ENCODE measurements at regions of chr21 and their contacts with region 1.

Region 1: GRCh38 chr21:20999659-21000058 is 1.4 kb downstream of the NCAM2 start:
- DNase-seq: no peak
- H3K4me3 ChIP-seq: no peak overlapping the region
- H3K27ac ChIP-seq: no peak overlapping the region
- H3K4me1 ChIP-seq: peaks cover 8% of the 10 kb centered on the region in 2 donors
- H3K27me3 ChIP-seq: no peaks in the 10 kb centered on the region
- CTCF ChIP-seq: peak; percentile 37 to 67 (median 53)

Region 2: GRCh38 chr21:21196087-21196486 is 196.4 kb after region 1 on chr21:
- intact Hi-C with region 1: loop called (anchors 5 kb)
- DNase-seq: no peak
- H3K4me3 ChIP-seq: no peak overlapping the region
- H3K27ac ChIP-seq: no peak overlapping the region
- H3K4me1 ChIP-seq: peaks cover 3 to 5% of the 10 kb centered on the region in 2 donors
- H3K27me3 ChIP-seq: no peaks in the 10 kb centered on the region
- CTCF ChIP-seq: no peak

Region 3: GRCh38 chr21:21295303-21295702 is 295.6 kb after region 1 on chr21:
- intact Hi-C with region 1: no loop called
- DNase-seq: no peak
- H3K4me3 ChIP-seq: no peak overlapping the region
- H3K27ac ChIP-seq: no peak overlapping the region
- H3K4me1 ChIP-seq: no peaks in the 10 kb centered on the region
- H3K27me3 ChIP-seq: no peaks in the 10 kb centered on the region
- CTCF ChIP-seq: no peak

Region 4: DNA sequence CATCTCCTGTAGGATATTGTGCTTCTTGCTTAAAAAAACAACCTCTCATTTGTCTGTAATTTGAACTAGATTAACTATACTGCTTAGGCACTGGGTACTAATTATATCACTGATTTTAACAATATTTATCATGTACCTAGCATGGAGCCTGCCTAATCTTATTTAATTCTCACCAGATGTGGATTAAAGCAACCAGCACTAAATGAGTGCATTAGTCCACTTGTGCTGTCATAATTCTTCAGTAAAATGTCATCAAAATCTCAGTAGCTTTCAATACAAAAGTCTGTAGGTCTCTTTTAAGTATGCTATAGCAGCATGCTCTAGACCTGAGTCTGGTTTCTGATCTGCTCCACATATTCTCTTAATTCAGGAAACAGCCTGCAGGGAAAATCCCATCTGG is 366.6 kb after region 1 on chr21:
- intact Hi-C with region 1: no loop called
- DNase-seq: no peak
- H3K4me3 ChIP-seq: no peak overlapping the region
- H3K27ac ChIP-seq: no peak overlapping the region
- H3K4me1 ChIP-seq: no peaks in the 10 kb centered on the region
- H3K27me3 ChIP-seq: no peaks in the 10 kb centered on the region
- CTCF ChIP-seq: no peak

Region 5: DNA sequence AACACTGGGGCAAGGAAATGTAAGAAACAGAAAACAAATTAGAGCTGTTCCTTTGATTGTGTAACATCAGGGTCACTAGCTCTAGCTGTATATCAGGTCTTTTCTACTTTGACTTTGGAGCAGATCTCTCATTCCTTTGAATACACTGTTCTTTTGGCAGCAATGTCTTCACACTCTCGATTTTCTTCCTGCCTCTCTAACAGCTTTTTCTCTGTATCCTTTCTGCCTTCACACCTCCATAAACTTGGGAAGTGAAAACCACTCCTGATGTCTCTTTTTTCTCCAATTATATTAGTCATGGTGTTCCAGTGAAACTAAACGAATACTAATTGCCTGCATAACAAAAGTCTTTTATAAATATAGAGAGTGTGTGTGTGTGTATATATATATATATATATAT is 1456.6 kb after region 1 on chr21:
- intact Hi-C with region 1: no loop called
- DNase-seq: no peak
- H3K4me3 ChIP-seq: no peak overlapping the region
- H3K27ac ChIP-seq: no peak overlapping the region
- H3K4me1 ChIP-seq: no peaks in the 10 kb centered on the region
- H3K27me3 ChIP-seq: no peaks in the 10 kb centered on the region
- CTCF ChIP-seq: no peak

Region 6: DNA sequence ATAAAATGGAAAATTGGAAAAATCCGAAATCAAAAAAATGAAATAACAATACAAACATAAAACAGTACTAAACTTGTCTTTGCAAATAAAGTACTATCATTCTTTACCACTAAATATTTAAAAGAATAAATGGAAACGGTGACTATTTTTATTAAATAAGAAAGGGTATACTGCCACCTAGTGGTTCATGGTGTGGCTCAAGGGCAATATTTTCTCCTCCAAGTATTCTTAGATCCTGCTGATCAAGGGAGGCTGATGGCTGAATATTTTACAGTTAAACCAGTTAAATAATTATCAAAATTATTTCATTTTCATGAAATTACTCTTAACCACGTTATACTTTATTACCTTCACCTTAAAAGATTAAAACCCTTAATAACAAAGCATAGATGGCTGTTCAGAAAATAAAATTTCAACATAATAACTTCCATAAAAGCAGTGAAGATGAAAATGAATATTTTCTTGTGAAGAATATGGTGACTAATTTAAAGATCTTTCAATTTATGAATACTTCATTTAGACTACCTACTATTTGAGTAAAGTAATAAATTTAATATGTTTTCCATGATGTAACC is 1792.4 kb after region 1 on chr21:
- intact Hi-C with region 1: loop called (anchors 5 kb)
- DNase-seq: no peak
- H3K4me3 ChIP-seq: no peak overlapping the region
- H3K27ac ChIP-seq: no peak overlapping the region
- H3K4me1 ChIP-seq: no peaks in the 10 kb centered on the region
- H3K27me3 ChIP-seq: no peaks in the 10 kb centered on the region
- CTCF ChIP-seq: peak in 2 of 3 experiments; percentile 55 to 61